Pancreas (tissue), 10 donors: ENCODE measurements at regions of chr15 and their contacts with region 1.

Region 1: GRCh38 chr15:85831415-85832113 is 36.8 kb upstream of the KLHL25 start:
- DNase-seq: peak in 5 of 6 donors; percentile 54 to 71 (median 60)
- ATAC-seq: peak; percentile 77 to 97 (median 93)
- H3K4me3 ChIP-seq: no peak overlapping the region
- H3K27ac ChIP-seq: no peak overlapping the region
- H3K4me1 ChIP-seq: no peaks in the 10 kb centered on the region
- H3K27me3 ChIP-seq: no peaks in the 10 kb centered on the region
- CTCF ChIP-seq: peak; percentile 11 to 38 (median 33)

Region 2: DNA sequence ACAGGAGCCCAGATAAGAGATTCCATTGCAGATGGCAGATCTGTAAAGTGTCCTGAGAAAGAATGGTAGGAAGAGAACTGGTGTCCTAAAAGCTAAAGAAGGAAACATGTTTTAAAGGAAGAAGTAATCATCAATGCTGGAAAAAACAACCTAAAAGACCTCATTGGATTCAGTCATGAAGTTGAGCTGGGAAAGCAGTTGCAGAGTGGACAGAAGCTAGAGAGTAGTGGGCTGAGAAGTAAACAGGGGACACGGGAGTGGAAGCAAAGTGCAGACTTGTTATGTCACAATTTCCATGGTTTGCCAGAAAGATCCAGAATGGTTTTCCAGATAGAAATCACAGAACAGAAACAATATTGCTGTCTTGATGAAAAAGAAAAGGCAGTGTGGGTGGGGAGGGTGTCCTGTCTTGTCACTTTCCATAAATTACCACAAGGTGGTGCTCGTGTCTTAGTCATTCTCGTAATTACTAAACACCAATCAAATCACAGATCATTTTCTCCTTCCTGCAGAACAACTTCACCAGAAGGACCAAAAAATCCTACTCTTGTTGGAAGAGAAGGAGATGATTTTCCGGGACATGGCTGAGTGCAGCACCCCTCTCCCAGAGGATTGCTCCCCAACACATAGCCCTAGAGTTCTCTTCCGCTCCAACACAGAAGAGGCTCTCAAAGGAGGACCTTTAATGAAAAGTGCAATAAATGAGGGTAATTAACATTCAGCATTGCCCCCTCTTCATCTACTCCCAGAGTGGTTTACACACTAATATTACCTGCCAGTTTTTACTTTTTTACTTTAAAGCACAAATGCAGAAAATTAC is 101.4 kb before region 1 on chr15:
- intact Hi-C with region 1: loop called in 2 of 3 experiments (anchors 5 kb)
- DNase-seq: peak in 1 of 6 donors; percentile 40
- ATAC-seq: peak; percentile 56 to 89 (median 86)
- H3K4me3 ChIP-seq: no peak overlapping the region
- H3K27ac ChIP-seq: peak overlapping the region in 1 of 4 donors; percentile 44
- H3K4me1 ChIP-seq: no peaks in the 10 kb centered on the region
- H3K27me3 ChIP-seq: no peaks in the 10 kb centered on the region
- CTCF ChIP-seq: peak; percentile 49 to 64 (median 56)

Region 3: GRCh38 chr15:85778107-85778776 is 53.3 kb before region 1 on chr15:
- intact Hi-C with region 1: no loop called
- DNase-seq: no peak
- ATAC-seq: peak in 3 of 4 donors; percentile 44 to 59 (median 57)
- H3K4me3 ChIP-seq: no peak overlapping the region
- H3K27ac ChIP-seq: no peak overlapping the region
- H3K4me1 ChIP-seq: peaks cover 0 to 2% (median 0%) of the 10 kb centered on the region in 3 donors
- H3K27me3 ChIP-seq: no peaks in the 10 kb centered on the region
- CTCF ChIP-seq: no peak

Region 4: GRCh38 chr15:85794603-85795336 is 36.8 kb before region 1 on chr15 and contains the start of gene KLHL25:
- intact Hi-C with region 1: loop called in 1 of 3 experiments (anchors 5 kb)
- DNase-seq: peak; percentile 93 to 97 (median 95)
- ATAC-seq: peak; percentile 95 to 98 (median 96)
- H3K4me3 ChIP-seq: peak within 1 kb of the TSS; percentile 62 to 91 (median 72)
- H3K27ac ChIP-seq: peak within 1 kb of the TSS; percentile 71 to 84 (median 80)
- H3K4me1 ChIP-seq: peaks cover 5 to 9% (median 6%) of the 10 kb centered on the region in 3 donors
- H3K27me3 ChIP-seq: no peaks in the 10 kb centered on the region
- CTCF ChIP-seq: no peak
- total RNA-seq, gene KLHL25: 0.93 to 2.6 (median 1.3) TPM

Region 5: DNA sequence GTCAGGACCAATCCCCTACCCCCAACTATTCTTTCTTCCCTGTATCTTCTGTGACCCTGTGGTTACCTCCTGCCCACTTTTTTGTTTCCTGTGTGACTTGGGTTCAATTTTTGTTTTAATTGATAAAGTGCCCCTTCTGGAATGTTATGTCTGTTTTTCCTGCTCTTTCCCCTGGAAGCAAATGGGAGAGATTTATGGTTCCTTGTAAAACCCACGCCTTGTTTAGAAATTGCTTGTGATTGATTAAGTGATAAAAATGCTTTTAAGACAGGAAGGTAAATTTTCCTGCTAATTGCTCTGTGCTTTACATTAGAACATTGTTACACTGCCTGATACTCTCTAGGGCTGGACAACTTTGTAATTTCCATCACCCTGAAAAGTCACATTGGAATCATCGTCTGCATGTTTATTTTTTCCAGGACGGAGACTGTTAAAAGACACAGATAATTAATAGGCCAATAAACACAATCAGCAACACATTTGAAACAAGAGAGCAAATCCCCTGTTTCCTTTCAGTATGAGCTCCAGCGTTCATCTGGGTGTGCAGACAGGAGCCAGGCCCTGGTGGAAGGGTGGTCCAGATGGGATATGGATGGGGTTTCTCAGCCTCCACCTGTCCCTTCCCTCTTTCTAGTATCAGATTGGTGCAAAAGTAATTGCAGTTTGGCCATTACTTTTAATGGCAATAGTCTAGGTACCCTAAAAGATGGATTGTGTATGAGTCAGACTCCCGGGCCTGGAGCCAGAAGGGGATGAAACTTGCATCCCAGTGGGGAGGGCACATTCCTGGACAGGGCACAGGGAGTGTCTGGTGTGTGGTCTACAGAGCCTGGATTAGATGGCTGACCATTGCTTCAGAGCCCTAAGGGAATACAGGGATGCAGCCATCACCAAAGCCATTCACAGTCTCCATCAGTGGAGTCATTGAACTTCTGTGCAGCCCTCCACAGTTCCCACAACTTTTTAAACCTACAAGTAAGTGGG is 190.0 kb after region 1 on chr15:
- intact Hi-C with region 1: no loop called
- DNase-seq: peak in 3 of 6 donors; percentile 3 to 41 (median 25)
- ATAC-seq: peak in 3 of 4 donors; percentile 42 to 51 (median 44)
- H3K4me3 ChIP-seq: no peak overlapping the region
- H3K27ac ChIP-seq: no peak overlapping the region
- H3K4me1 ChIP-seq: no peaks in the 10 kb centered on the region
- H3K27me3 ChIP-seq: peaks cover 0 to 3% (median 0%) of the 10 kb centered on the region in 4 donors
- CTCF ChIP-seq: no peak